GM12878 (cell line): ENCODE measurements at regions of chr18 and their contacts with region 1.

Region 1: DNA sequence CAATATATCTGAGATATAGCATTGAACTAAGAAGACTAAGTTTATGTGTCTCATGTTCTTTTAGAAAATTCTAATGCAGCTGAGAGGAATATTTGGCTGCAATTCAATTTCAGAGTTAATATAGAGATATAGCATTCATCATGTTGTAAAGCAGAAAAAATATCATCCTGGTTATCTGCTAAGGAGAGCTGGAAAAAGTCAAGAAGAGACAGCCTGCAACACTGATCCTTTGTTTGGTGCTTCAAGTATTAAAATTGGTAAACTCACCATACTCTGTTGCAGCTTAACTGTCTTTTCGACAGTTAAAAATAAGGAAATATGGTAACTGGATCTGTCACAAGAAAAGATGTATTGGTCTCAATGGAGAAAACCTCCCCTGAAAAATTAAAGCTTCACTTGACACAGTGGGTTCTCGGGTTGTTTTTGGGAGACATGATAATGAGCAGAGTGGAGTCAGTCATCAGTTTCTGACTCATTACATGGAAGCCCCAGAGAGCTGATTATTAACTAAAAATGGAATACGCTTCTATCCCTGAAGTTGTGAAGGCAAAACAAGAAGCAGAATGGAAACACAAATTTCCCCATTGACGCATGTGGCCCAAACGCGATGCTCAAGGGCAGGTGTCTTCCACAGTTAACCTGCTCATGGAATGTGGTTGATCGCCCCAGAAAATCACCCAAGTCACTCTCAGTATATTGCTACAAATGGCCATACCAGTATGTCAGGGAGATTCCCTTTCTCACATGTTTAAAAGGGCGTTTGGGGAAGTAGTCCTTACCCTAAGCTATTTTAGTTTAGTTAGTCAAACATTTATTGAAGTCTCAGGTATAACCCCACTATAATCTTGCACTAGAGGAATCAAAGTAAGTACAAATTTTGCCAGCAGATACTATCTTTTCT is 8.2 kb downstream of the BCL2 start:
- DNase-seq: peak; percentile 88
- ATAC-seq: peak; percentile 65
- H3K4me3 ChIP-seq: peak overlapping the region; percentile 98
- H3K27ac ChIP-seq: peak overlapping the region; percentile 90
- H3K4me1 ChIP-seq: peaks cover 34% of the 10 kb centered on the region
- H3K27me3 ChIP-seq: no peaks in the 10 kb centered on the region
- CTCF ChIP-seq: no peak
- EP300 ChIP-seq: peak; percentile 93 to 96; a peak in 3 of 4 replicates
- POLR2A ChIP-seq: no peak; the same call in 1 of the 2 replicates
- RAD21 ChIP-seq: no peak

Region 2: DNA sequence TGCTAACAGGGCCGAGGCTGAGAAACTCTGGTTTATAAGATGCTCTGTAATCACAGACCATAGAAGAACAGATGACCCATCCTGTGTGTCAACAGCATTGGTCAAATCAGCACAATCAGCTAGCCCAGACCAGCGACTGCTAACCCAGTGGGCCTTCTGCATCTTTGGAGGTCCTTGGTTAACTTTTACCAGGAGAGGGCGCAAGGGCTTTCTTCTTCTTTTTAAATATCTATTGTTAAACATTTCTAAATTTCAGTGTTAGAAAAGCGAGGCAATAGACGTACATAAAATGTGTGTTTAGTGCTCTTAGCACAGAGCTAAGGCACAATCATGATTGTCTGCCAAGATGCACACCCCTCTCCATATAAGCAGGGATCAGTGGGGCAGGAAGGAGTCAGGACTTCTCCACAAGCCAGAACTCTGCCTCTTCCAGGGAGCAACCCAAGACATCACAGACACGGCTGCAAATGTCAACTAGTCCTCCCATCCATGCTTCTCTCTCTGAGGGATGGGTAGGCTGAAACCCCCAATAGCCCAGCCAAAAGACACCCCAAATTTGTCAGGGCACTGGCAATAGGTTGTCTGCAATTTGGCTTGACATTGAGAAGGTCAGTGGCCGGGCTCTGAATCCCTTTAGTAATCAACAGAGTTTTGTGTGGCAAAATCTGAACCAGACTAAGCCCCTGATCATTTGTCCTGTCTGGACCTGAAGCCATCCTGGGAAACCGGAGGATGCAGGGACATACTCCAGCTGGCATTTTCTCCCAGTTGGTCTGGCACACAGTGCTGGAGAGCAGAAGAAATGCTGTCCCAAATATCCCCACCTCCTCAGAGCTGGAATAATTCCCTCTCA is 180.0 kb before region 1 on chr18:
- CTCF ChIA-PET with region 1: interaction called, 17 read pairs
- POLR2A ChIA-PET with region 1: interaction called, 4 read pairs
- RAD21 ChIA-PET with region 1: interaction called, 13 read pairs
- SMC1A ChIA-PET with region 1: interaction called, 17 read pairs
- in situ Hi-C with region 1: no loop called
- intact Hi-C with region 1: no loop called
- DNase-seq: no peak
- ATAC-seq: peak; percentile 84
- H3K4me3 ChIP-seq: no peak overlapping the region
- H3K27ac ChIP-seq: peak overlapping the region; percentile 49
- H3K4me1 ChIP-seq: peaks cover 24% of the 10 kb centered on the region
- H3K27me3 ChIP-seq: no peaks in the 10 kb centered on the region
- CTCF ChIP-seq: peak; percentile 52 to 65 (median 59)
- EP300 ChIP-seq: no peak
- POLR2A ChIP-seq: no peak
- RAD21 ChIP-seq: peak; percentile 76

Region 3: GRCh38 chr18:63155169-63155852 is 156.1 kb before region 1 on chr18:
- CTCF ChIA-PET with region 1: interaction called, 119 read pairs
- POLR2A ChIA-PET with region 1: interaction called, 144 read pairs
- RAD21 ChIA-PET with region 1: interaction called, 172 read pairs
- SMC1A ChIA-PET with region 1: interaction called, 161 read pairs
- in situ Hi-C with region 1: no loop called
- intact Hi-C with region 1: loop called (anchors 2 kb)
- DNase-seq: peak; percentile 88
- ATAC-seq: peak; percentile 46
- H3K4me3 ChIP-seq: peak overlapping the region; percentile 76; the same call in 1 of the 2 replicates
- H3K27ac ChIP-seq: peak overlapping the region; percentile 100
- H3K4me1 ChIP-seq: peaks cover 84% of the 10 kb centered on the region
- H3K27me3 ChIP-seq: no peaks in the 10 kb centered on the region
- CTCF ChIP-seq: peak in 2 of 3 experiments; percentile 96 to 98; a peak in 4 of 6 replicates
- EP300 ChIP-seq: peak; percentile 72 to 79; a peak in 3 of 4 replicates
- POLR2A ChIP-seq: peak; percentile 54; the same call in 1 of the 2 replicates
- RAD21 ChIP-seq: peak; percentile 78

Region 4: GRCh38 chr18:63177919-63178821 is 133.2 kb before region 1 on chr18:
- CTCF ChIA-PET with region 1: interaction called, 5 read pairs
- POLR2A ChIA-PET with region 1: interaction called, 8 read pairs
- RAD21 ChIA-PET with region 1: interaction called, 9 read pairs
- SMC1A ChIA-PET with region 1: interaction called, 12 read pairs
- in situ Hi-C with region 1: no loop called
- intact Hi-C with region 1: no loop called
- DNase-seq: no peak
- ATAC-seq: peak; percentile 16; the same call in 2 of the 3 replicates
- H3K4me3 ChIP-seq: no peak overlapping the region
- H3K27ac ChIP-seq: peak overlapping the region; percentile 64
- H3K4me1 ChIP-seq: peaks cover 81% of the 10 kb centered on the region
- H3K27me3 ChIP-seq: no peaks in the 10 kb centered on the region
- CTCF ChIP-seq: no peak
- EP300 ChIP-seq: no peak; a peak in 1 of 4 replicates
- POLR2A ChIP-seq: no peak
- RAD21 ChIP-seq: 0 out of 2 replicates have a peak, but pooled peaks have one; percentile 12

Region 5: DNA sequence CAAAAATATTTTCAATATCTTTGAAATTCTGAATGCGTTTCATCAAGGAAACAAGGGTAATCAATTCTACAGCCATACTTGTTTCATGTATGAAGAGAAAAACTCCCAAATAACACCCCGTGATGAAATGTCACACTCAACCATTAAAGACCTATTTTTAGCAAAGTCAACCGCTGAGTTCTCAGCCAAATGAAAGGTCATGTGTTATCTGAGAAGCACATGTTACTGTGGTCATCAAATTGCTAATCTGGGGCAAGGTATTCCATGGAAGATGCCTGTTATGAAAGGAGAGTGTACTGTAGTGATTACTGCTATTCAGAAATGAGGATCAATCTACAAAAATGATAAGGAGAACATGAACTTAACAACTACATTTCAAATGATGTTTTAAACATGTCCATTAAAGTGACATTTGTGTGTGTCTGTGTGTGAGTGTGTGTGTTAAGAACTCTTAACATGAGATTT is 118.5 kb before region 1 on chr18:
- CTCF ChIA-PET with region 1: interaction called, 3 read pairs
- POLR2A ChIA-PET with region 1: interaction called, 5 read pairs
- RAD21 ChIA-PET with region 1: interaction called, 13 read pairs
- SMC1A ChIA-PET with region 1: interaction called, 28 read pairs
- in situ Hi-C with region 1: no loop called
- intact Hi-C with region 1: no loop called
- DNase-seq: peak; percentile 72
- ATAC-seq: peak; percentile 75
- H3K4me3 ChIP-seq: no peak overlapping the region
- H3K27ac ChIP-seq: peak overlapping the region; percentile 51
- H3K4me1 ChIP-seq: peaks cover 27% of the 10 kb centered on the region
- H3K27me3 ChIP-seq: no peaks in the 10 kb centered on the region
- CTCF ChIP-seq: no peak
- EP300 ChIP-seq: peak; percentile 85 to 86
- POLR2A ChIP-seq: no peak
- RAD21 ChIP-seq: no peak

Region 6: DNA sequence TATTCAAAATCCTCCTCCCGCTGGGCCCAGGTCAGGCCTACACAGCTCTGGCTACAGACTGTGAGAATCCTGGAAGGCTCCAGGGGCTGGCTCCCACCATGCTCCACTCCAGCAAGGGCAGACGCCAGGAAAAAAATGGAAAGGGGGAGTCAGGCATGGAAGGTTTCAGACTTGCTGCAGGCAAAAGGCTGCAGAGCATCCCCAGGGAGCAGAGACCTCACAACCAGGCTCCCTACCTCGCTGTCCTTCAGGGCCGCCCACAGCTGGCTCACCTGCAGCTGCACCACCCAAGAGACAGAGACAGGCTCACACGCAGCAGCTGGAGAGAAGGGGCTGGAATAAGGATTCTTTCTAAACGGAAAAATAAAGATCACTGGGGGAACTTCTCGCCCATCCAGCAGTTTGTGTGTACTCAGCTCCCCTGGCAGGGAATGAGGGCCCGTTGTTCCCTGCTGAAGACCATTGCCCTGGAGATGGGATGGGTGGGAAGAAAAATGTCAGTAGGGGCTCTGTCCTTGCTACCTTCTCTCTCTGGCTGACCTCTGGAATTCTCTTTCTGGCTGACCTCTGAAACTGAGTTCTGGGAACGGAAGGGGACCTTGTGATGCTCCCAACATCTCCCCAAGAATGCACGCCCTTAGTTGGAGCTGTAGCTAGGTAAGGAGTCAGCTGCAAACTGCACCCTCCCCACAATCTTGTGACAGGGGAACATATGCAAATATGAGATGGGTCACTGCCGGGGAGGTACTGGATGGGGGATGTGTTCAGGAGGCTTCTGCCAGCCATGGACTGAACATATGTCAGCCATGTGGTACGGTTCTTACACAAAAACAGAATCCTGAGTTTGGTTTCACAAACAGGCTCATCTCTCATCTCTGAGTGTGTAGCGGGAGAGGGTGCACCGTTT is 26.3 kb before region 1 on chr18:
- CTCF ChIA-PET with region 1: interaction called, 8 read pairs
- POLR2A ChIA-PET with region 1: interaction called, 6 read pairs
- RAD21 ChIA-PET with region 1: interaction called, 10 read pairs
- SMC1A ChIA-PET with region 1: interaction called, 22 read pairs
- in situ Hi-C with region 1: no loop called
- intact Hi-C with region 1: no loop called
- DNase-seq: peak; percentile 66
- ATAC-seq: peak; percentile 94
- H3K4me3 ChIP-seq: peak overlapping the region; percentile 25
- H3K27ac ChIP-seq: peak overlapping the region; percentile 73
- H3K4me1 ChIP-seq: peaks cover 57% of the 10 kb centered on the region
- H3K27me3 ChIP-seq: no peaks in the 10 kb centered on the region
- CTCF ChIP-seq: no peak
- EP300 ChIP-seq: no peak
- POLR2A ChIP-seq: peak; percentile 65
- RAD21 ChIP-seq: no peak

Region 7: GRCh38 chr18:63299837-63300745 is 11.3 kb before region 1 on chr18:
- CTCF ChIA-PET with region 1: interaction called, 9 read pairs
- POLR2A ChIA-PET with region 1: interaction called, 18 read pairs
- RAD21 ChIA-PET with region 1: interaction called, 13 read pairs
- SMC1A ChIA-PET with region 1: interaction called, 32 read pairs
- in situ Hi-C with region 1: no loop called
- intact Hi-C with region 1: no loop called
- DNase-seq: no peak
- ATAC-seq: peak; percentile 83
- H3K4me3 ChIP-seq: no peak overlapping the region; the same call in 1 of the 2 replicates
- H3K27ac ChIP-seq: peak overlapping the region; percentile 55
- H3K4me1 ChIP-seq: peaks cover 48% of the 10 kb centered on the region
- H3K27me3 ChIP-seq: no peaks in the 10 kb centered on the region
- CTCF ChIP-seq: no peak
- EP300 ChIP-seq: 0 out of 4 replicates have a peak, but pooled peaks of 1 of the 2 experiments have one; percentile 23
- POLR2A ChIP-seq: no peak
- RAD21 ChIP-seq: no peak